ENCODE measurements at regions of chr7 and their contacts with region 1.

Region 1: GRCh38 chr7:107966711-107967110 is 36.2 kb downstream of the LAMB1 start:
- DNase-seq: peak; percentile 90
- ATAC-seq: peak; percentile 79
- H3K4me3 ChIP-seq: no peak overlapping the region
- H3K27ac ChIP-seq: no peak overlapping the region
- H3K4me1 ChIP-seq: peaks cover 39% of the 10 kb centered on the region
- H3K27me3 ChIP-seq: no peaks in the 10 kb centered on the region
- CTCF ChIP-seq: no peak
- EP300 ChIP-seq: no peak
- POLR2A ChIP-seq: no peak
- RAD21 ChIP-seq: no peak

Region 2: DNA sequence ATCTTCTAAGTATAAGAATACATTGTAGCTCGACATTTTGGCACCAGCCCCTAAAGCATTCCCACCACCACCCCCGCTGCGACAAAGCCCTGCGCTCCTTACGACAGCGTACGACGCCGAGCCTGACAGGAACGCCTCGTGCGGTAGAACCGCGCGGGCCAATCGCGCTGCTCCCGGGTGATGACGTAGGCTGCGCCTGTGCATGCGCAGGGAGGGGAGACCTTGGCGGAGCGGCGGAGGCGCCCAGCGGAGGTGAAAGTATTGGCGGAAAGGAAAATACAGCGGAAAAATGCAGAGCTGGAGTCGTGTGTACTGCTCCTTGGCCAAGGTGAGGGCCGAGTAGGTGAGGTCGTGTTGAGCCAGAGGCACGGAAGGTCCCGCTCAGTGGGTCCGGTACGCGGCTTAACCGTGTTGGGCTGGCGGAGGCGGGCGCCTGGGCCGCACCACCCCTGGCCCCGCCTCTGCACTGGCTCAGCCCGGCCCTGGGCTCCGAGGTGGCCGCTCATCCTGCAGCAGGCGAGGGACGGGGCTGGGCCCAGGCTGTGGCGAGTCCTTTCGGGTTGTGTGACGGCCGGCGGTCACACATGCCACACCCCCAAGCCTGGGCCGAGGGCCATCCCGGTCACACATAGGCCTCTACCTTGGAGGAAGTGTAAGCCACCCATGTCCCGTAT is 75.6 kb before region 1 on chr7 and contains the start of gene DLD:
- CTCF ChIA-PET with region 1: no interaction called
- POLR2A ChIA-PET with region 1: no interaction called
- in situ Hi-C with region 1: no loop called
- intact Hi-C with region 1: loop called (anchors 5 kb)
- DNase-seq: peak; percentile 76
- ATAC-seq: peak; percentile 98
- H3K4me3 ChIP-seq: peak within 1 kb of the TSS; percentile 73 to 86 (median 79)
- H3K27ac ChIP-seq: peak within 1 kb of the TSS; percentile 86
- H3K4me1 ChIP-seq: peaks cover 33% of the 10 kb centered on the region
- H3K27me3 ChIP-seq: no peaks in the 10 kb centered on the region; a peak in 1 of 5 replicates
- CTCF ChIP-seq: no peak
- EP300 ChIP-seq: no peak
- POLR2A ChIP-seq: peak; percentile 75 to 85
- RAD21 ChIP-seq: no peak
- total RNA-seq, gene DLD: 95.2 and 128 TPM in 2 replicates

Region 3: GRCh38 chr7:107948645-107949497 is 17.8 kb before region 1 on chr7:
- CTCF ChIA-PET with region 1: no interaction called
- POLR2A ChIA-PET with region 1: interaction called, 5 read pairs
- in situ Hi-C with region 1: no loop called
- intact Hi-C with region 1: loop called (anchors 2 kb)
- DNase-seq: peak; percentile 86
- ATAC-seq: peak; percentile 80
- H3K4me3 ChIP-seq: no peak overlapping the region; a peak in 1 of 6 replicates
- H3K27ac ChIP-seq: peak overlapping the region; percentile 60
- H3K4me1 ChIP-seq: peaks cover 57% of the 10 kb centered on the region
- H3K27me3 ChIP-seq: no peaks in the 10 kb centered on the region
- CTCF ChIP-seq: no peak
- EP300 ChIP-seq: peak in 1 of 2 experiments; percentile 71; a peak in 1 of 4 replicates
- POLR2A ChIP-seq: no peak
- RAD21 ChIP-seq: no peak

Region 4: GRCh38 chr7:108002726-108003598 is 36.3 kb after region 1 on chr7 and contains the start of gene LAMB1:
- CTCF ChIA-PET with region 1: no interaction called
- POLR2A ChIA-PET with region 1: interaction called, 15 read pairs
- in situ Hi-C with region 1: no loop called
- intact Hi-C with region 1: loop called (anchors 1 kb)
- DNase-seq: peak; percentile 73
- ATAC-seq: peak; percentile 76
- H3K4me3 ChIP-seq: peak within 1 kb of the TSS; percentile 75 to 93 (median 85)
- H3K27ac ChIP-seq: peak within 1 kb of the TSS; percentile 68
- H3K4me1 ChIP-seq: peaks cover 87% of the 10 kb centered on the region
- H3K27me3 ChIP-seq: no peaks in the 10 kb centered on the region
- CTCF ChIP-seq: no peak; the same call in 1 of the 2 replicates
- EP300 ChIP-seq: no peak
- POLR2A ChIP-seq: peak; percentile 62 to 72
- RAD21 ChIP-seq: no peak
- total RNA-seq, gene LAMB1: 56.4 and 109 TPM in 2 replicates

Region 5: DNA sequence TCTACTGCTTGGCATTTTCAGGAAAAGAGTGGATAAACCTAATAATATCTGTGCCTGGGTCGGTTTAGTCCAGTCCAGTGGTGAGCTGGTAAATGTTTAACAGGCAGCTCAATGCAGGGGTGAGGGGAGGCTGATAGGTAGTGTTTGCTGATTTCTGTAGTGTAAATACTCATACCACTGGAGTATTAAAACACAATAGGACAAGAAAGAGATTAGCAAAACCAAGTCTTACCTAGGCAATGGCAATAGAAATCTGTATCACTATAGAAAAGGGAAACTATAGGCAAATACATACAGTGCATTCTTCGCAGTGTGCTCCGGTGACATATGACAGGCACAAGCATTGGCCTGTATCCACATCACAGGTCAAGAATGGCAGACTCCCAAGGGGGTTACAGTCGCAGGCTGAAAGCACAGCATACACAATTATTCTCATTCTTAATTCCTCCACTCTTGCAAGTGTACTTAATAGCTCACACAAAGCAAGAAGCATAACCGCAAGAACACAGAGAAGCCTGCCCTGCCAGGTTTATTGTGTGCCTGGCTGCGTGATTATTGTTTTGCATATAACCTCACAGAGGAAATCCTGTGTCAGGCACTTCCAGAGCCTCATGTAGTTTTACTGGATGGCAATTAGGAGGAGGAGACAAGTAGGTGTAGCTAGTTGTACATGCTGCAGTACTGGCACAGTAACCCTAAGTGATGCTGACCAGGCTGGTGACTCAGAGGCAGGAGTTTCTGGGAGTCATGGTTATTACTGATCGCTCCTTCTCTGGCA is 128.4 kb after region 1 on chr7:
- CTCF ChIA-PET with region 1: no interaction called
- POLR2A ChIA-PET with region 1: interaction called, 3 read pairs
- in situ Hi-C with region 1: no loop called
- intact Hi-C with region 1: loop called (anchors 1 kb)
- DNase-seq: peak; percentile 88
- ATAC-seq: peak; percentile 96
- H3K4me3 ChIP-seq: peak overlapping the region in 1 of 3 experiments; percentile 24; a peak in 1 of 6 replicates
- H3K27ac ChIP-seq: no peak overlapping the region
- H3K4me1 ChIP-seq: peaks cover 49% of the 10 kb centered on the region
- H3K27me3 ChIP-seq: no peaks in the 10 kb centered on the region
- CTCF ChIP-seq: no peak
- EP300 ChIP-seq: peak in 1 of 2 experiments; percentile 56; a peak in 2 of 4 replicates
- POLR2A ChIP-seq: no peak
- RAD21 ChIP-seq: no peak

Measured in HepG2 (cell line).